CD14-positive monocyte (primary cell): ENCODE measurements at regions of chr5 and their contacts with region 1.

Region 1: DNA sequence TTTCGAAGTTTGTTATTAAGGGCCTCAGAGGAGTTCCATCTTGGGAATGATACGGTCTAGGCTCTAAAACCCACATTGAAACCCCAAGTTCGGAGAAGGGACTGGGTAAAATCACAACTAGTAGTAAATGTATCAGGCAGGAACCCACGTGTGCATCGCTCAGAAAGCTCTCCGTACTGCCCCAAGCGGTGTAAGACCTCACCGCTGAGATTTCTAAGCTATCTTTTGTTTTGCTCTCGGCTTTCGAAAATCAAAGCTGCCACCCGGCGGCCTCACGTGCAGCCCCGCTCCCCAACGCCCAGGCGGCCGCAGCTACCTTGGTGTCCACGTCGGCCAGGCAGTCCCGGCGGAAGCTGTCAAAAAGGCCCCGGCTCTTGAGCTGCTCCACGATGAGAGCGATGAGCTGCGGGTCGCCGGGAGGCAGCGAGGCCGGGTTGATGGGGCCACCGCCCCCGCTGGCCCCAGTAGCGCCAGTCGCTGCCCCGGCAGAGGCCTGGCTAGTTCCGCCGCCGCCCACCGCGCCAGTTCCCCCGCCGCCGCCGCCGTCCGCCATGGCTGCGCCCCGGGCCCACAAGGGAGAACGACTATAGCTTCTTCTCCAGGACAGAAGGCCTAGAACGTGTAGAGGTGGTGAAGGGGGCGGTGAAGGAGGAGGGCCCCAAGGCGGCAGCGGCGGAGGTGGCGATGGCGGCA is 420 bp downstream of the BOD1 start:
- DNase-seq: peak; percentile 67 to 72 (median 70)
- H3K4me3 ChIP-seq: peak overlapping the region; percentile 73 to 91 (median 88)
- H3K4me3 Mint-ChIP-seq: peak overlapping the region; percentile 81 to 85
- H3K27ac ChIP-seq: peak overlapping the region; percentile 74 to 91
- H3K27ac Mint-ChIP-seq: peak overlapping the region; percentile 82 to 95 (median 93)
- H3K4me1 ChIP-seq: peaks cover 18 to 22% of the 10 kb centered on the region in 2 donors
- H3K4me1 Mint-ChIP-seq: peaks cover 34% of the 10 kb centered on the region
- H3K27me3 ChIP-seq: no peaks in the 10 kb centered on the region
- H3K27me3 Mint-ChIP-seq: no peaks in the 10 kb centered on the region
- CTCF ChIP-seq: peak; percentile 77

Region 2: DNA sequence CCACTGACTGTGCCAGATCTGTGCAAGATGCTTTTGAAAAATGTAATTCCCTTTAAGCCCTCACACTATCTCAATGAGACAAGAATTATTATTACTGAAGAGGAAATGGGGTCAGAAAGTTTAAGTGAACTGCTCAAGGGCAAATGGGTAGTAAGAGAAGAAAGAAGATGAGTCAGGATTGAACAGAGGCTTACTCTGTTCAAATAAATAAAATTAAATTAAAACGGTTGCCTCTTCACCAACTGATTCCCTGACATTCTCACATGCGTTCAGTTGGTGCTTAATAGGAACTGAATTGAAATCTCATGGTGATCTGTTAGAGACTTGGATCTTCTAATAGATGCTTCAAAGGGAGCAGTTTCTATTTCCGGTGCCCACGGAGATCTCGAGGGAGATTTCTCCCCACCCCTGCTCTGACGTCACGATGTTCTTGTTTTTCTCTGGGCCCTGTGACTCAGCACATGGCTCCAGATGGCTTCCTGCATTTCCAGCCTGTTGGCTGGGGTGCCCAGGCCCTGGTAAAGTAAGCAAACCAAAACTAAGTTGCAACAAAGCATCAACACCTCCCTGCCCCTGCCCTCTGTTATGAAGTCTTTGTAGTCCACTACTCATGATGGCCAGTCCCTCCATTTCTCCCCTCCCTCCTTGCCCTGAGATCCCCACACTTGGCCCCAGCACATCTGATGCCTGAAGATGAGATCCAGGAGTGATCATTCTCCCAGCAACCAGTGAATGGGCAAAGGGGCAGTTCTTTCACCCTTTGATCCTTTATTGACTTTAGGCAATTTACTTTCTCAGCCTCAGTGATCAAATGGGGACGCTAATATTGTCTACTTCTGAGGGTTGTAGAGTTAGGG is 166.0 kb after region 1 on chr5:
- intact Hi-C with region 1: loop called in 1 of 2 experiments (anchors 10 kb)
- DNase-seq: peak; percentile 96 to 97 (median 96)
- H3K4me3 ChIP-seq: peak overlapping the region in 2 of 3 experiments; percentile 20 to 37
- H3K4me3 Mint-ChIP-seq: peak overlapping the region; percentile 32 to 37
- H3K27ac ChIP-seq: peak overlapping the region; percentile 93 to 100
- H3K27ac Mint-ChIP-seq: peak overlapping the region; percentile 95 to 100 (median 99)
- H3K4me1 ChIP-seq: peaks cover 83% of the 10 kb centered on the region in 2 donors
- H3K4me1 Mint-ChIP-seq: peaks cover 76% of the 10 kb centered on the region
- H3K27me3 ChIP-seq: no peaks in the 10 kb centered on the region
- H3K27me3 Mint-ChIP-seq: no peaks in the 10 kb centered on the region
- CTCF ChIP-seq: no peak

Region 3: GRCh38 chr5:173887610-173888472 is 271.8 kb after region 1 on chr5 and contains the start of gene CPEB4:
- intact Hi-C with region 1: loop called in 1 of 2 experiments (anchors 2 kb)
- DNase-seq: peak; percentile 100
- H3K4me3 ChIP-seq: peak within 1 kb of the TSS; percentile 70 to 97 (median 97)
- H3K4me3 Mint-ChIP-seq: peak within 1 kb of the TSS; percentile 97 to 100
- H3K27ac ChIP-seq: peak within 1 kb of the TSS; percentile 83 to 93
- H3K27ac Mint-ChIP-seq: peak within 1 kb of the TSS; percentile 96 to 100 (median 99)
- H3K4me1 ChIP-seq: peaks cover 51 to 84% of the 10 kb centered on the region in 2 donors
- H3K4me1 Mint-ChIP-seq: peaks cover 69% of the 10 kb centered on the region
- H3K27me3 ChIP-seq: no peaks in the 10 kb centered on the region
- H3K27me3 Mint-ChIP-seq: no peaks in the 10 kb centered on the region
- CTCF ChIP-seq: no peak
- polyA plus RNA-seq, gene CPEB4: 10.7 to 27.3 (median 13.9) TPM

Region 4: GRCh38 chr5:173972925-173973615 is 357.0 kb after region 1 on chr5:
- intact Hi-C with region 1: loop called (anchors 1 to 2 kb)
- DNase-seq: peak; percentile 64 to 75 (median 75)
- H3K4me3 ChIP-seq: peak overlapping the region; percentile 25 to 73 (median 25)
- H3K4me3 Mint-ChIP-seq: peak overlapping the region; percentile 82 to 89
- H3K27ac ChIP-seq: no peak overlapping the region
- H3K27ac Mint-ChIP-seq: peak overlapping the region in 4 of 7 donors; percentile 15 to 56 (median 48)
- H3K4me1 ChIP-seq: peaks cover 11 to 14% of the 10 kb centered on the region in 2 donors
- H3K4me1 Mint-ChIP-seq: peaks cover 29% of the 10 kb centered on the region
- H3K27me3 ChIP-seq: peaks cover 2 to 16% of the 10 kb centered on the region in 2 donors
- H3K27me3 Mint-ChIP-seq: peaks cover 19 to 36% (median 22%) of the 10 kb centered on the region in 3 donors
- CTCF ChIP-seq: peak; percentile 84

Region 5: DNA sequence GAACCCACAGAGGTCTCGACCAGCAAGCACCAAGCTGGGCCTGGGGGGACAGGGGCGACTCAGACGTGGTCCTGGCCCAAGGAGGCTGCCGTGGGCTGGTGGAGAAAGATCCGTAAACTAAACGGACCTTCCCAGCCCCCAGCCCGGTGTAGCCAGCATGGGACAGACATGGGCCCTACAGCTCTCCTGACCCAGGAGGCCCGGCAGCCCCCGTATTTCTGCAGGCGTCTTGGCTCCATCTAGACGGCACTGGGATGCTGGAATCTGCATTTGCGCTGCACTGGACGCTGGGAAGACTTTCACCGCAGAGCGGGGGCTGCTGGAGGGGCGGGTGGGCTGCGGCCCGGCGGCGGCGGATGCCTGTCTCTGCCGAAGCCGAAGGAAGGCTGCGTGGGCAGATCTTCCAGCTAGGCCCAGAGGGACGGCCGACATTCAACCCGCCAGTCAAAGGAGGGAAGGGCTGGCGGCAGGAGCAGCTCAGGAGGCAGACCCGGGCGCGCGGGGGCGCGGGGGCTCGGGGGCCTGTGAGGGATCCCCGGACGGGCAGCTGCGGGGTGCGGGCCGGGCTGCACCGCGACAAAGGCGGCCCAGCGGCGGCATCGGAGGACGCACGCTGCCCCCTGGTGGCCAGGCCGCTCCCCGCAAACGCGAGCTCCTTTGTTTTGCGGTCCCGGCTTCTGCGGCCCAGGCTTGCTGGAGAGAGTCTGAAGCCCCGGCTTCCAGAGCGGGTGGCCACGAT is 695.7 kb after region 1 on chr5:
- intact Hi-C with region 1: loop called (anchors 5 to 10 kb)
- DNase-seq: peak; percentile 19 to 44 (median 23)
- H3K4me3 ChIP-seq: peak overlapping the region in 1 of 3 experiments; percentile 51
- H3K4me3 Mint-ChIP-seq: peak overlapping the region in 1 of 2 donors; percentile 72
- H3K27ac ChIP-seq: no peak overlapping the region
- H3K27ac Mint-ChIP-seq: no peak overlapping the region
- H3K4me1 ChIP-seq: peaks cover 0 to 3% of the 10 kb centered on the region in 2 donors
- H3K4me1 Mint-ChIP-seq: no peaks in the 10 kb centered on the region
- H3K27me3 ChIP-seq: peaks cover 2 to 30% of the 10 kb centered on the region in 2 donors
- H3K27me3 Mint-ChIP-seq: peaks cover 29 to 40% (median 32%) of the 10 kb centered on the region in 3 donors
- CTCF ChIP-seq: peak; percentile 87

Region 6: GRCh38 chr5:174448662-174449061 is 832.6 kb after region 1 on chr5:
- intact Hi-C with region 1: no loop called
- DNase-seq: no peak
- H3K4me3 ChIP-seq: no peak overlapping the region
- H3K4me3 Mint-ChIP-seq: no peak overlapping the region
- H3K27ac ChIP-seq: no peak overlapping the region
- H3K27ac Mint-ChIP-seq: no peak overlapping the region
- H3K4me1 ChIP-seq: no peaks in the 10 kb centered on the region
- H3K4me1 Mint-ChIP-seq: no peaks in the 10 kb centered on the region
- H3K27me3 ChIP-seq: no peaks in the 10 kb centered on the region
- H3K27me3 Mint-ChIP-seq: peaks cover 0 to 6% (median 3%) of the 10 kb centered on the region in 3 donors
- CTCF ChIP-seq: no peak

Region 7: DNA sequence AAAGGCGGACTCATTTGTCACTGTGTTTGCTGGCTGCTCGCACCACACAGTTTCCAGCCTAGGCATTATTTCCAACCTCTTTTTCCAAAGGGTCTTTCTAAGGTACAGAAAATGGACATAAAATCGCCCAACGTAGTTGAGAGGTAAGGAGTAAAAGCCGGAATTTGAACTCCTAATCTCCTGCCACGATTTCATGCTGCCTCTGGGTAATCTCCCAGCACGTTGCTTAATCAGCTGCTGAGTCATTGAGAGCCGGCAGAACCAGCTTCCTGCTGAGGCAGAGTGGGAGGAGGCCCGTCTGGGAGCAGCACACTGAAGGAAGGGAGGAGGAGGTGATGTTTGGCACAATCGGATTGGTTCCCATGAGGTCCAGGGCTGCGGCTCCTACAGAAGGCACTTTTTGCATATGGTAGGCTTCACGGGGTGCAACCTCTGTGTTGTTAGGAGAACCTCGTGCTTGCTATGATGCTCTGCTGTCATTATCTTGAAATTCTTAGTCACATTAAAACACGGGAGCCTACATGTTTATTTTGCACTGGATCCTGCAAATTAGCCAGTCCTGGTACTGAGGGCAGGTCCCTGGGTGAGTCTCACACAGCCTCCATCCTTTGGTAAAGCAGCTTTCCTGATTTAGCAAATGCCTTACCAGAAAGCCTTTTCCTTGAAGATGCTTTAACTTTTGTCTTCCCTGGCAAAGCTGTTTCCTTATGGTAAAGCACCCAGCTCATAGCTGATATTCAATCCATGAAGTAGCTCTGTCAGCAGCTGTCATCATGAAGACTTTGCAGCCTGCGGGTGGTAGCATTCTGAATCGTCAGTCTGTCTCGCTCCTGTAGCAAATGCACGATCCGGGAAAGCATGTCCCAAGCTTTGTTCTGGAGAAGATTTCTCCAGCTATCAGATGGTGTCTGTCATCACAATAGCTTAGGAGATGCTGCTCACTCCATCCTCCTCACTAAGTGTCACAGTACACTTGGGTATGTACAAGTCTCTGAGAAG is 916.7 kb after region 1 on chr5:
- intact Hi-C with region 1: loop called in 1 of 2 experiments (anchors 10 kb)
- DNase-seq: peak; percentile 86 to 93 (median 92)
- H3K4me3 ChIP-seq: peak overlapping the region in 2 of 3 experiments; percentile 18 to 65
- H3K4me3 Mint-ChIP-seq: peak overlapping the region; percentile 51 to 83
- H3K27ac ChIP-seq: peak overlapping the region; percentile 29 to 87
- H3K27ac Mint-ChIP-seq: peak overlapping the region; percentile 82 to 94 (median 91)
- H3K4me1 ChIP-seq: peaks cover 39 to 41% of the 10 kb centered on the region in 2 donors
- H3K4me1 Mint-ChIP-seq: peaks cover 38% of the 10 kb centered on the region
- H3K27me3 ChIP-seq: no peaks in the 10 kb centered on the region
- H3K27me3 Mint-ChIP-seq: peaks cover 3 to 6% (median 5%) of the 10 kb centered on the region in 3 donors
- CTCF ChIP-seq: no peak